ENCODE measurements at regions of chr1 and their contacts with region 1.

Region 1: GRCh38 chr1:46527474-46528296 is 23.8 kb downstream of the KNCN start:
- DNase-seq: peak in 1 of 2 donors; percentile 88
- H3K4me3 ChIP-seq: no peak overlapping the region
- H3K27ac ChIP-seq: no peak overlapping the region
- H3K4me1 ChIP-seq: peaks cover under 1 to 5% of the 10 kb centered on the region in 2 donors
- H3K27me3 ChIP-seq: no peaks in the 10 kb centered on the region
- CTCF ChIP-seq: peak; percentile 83 to 91 (median 90)

Region 2: DNA sequence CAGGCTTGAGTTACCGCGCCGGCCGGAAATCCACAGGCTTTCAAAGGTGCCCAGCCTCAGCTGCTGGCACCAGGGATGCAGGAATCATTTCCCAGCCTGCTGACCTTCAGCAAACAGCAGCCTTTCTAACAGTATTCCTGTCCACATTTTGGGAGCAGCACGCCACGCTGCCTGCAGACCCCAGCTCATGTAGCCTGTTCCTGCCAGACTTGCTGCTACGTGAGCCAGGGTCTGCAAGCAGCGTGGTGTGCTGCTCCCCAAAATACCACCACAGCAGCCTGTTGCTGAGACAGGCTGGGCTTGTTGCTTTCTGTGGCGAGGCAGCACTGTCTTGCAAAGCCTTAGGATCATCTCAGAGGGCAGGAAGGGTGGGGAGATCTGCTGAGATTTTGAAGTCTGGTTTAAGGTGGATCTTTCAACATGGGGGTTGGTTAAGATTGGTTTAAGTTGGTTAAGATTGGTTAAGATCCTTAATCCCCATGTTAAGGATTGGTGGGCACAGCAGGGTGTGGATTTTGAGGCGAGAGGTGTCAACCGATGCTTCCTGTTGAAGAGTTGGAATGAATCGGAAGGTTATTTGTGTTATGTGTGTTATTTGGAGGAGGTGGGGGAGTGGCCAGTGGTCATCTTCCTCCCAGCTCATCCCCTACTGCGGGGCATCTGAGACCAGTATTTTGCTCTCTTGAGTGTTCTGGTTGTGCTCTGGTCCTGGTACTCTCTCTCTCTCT is 120.6 kb before region 1 on chr1:
- intact Hi-C with region 1: loop called (anchors 1 kb)
- DNase-seq: no peak
- H3K4me3 ChIP-seq: peak overlapping the region; percentile 41 to 50
- H3K27ac ChIP-seq: no peak overlapping the region
- H3K4me1 ChIP-seq: peaks cover 6 to 21% of the 10 kb centered on the region in 2 donors
- H3K27me3 ChIP-seq: no peaks in the 10 kb centered on the region
- CTCF ChIP-seq: no peak

Region 3: DNA sequence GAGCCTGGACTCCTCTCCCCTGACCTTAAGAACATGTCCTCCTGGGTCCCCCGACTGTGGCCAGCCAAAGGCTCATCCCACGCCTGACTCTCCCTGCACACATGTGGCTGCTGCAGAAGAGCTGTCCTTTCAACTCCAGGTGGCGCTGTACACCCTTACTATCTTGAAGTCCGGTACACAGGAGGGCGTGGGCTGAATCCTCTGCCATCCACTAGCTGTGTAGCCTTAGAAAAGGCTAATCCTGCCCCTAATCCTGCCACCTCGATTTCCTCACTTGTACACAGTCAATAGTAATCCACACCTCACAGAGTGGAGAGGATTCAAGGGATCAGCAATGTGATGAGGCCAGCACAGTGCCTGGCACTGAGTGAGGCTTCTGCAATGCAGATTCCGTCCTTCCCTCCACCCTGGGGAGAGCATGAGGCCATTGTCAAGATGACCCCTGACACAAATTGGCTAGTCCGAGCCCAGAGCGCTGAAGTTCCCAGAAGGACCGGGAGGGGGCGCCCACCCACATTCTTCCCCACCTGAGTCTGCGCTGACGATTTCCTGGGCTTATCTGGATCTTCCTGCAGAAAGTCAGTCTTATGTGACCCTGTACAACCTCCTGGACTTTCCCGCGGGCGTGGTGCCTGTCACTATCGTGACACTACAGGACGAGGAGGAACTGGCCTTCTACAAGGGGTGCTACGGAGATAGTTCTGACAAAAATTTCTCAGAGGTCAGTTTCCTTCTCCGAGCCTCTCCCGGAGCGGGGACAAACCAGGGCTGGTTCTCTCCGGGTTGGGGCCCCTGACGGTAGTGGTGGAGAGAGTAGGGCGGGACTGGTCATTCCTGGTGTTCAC is 85.1 kb before region 1 on chr1:
- intact Hi-C with region 1: loop called (anchors 1 kb)
- DNase-seq: peak in 1 of 2 donors; percentile 88
- H3K4me3 ChIP-seq: peak overlapping the region; percentile 20 to 50
- H3K27ac ChIP-seq: no peak overlapping the region
- H3K4me1 ChIP-seq: no peaks in the 10 kb centered on the region
- H3K27me3 ChIP-seq: no peaks in the 10 kb centered on the region
- CTCF ChIP-seq: peak; percentile 65 to 93 (median 87)

Region 4: GRCh38 chr1:46477153-46477929 is 50.3 kb before region 1 on chr1:
- intact Hi-C with region 1: loop called (anchors 1 kb)
- DNase-seq: peak in 1 of 2 donors; percentile 80
- H3K4me3 ChIP-seq: no peak overlapping the region
- H3K27ac ChIP-seq: no peak overlapping the region
- H3K4me1 ChIP-seq: no peaks in the 10 kb centered on the region
- H3K27me3 ChIP-seq: no peaks in the 10 kb centered on the region
- CTCF ChIP-seq: peak; percentile 66 to 82 (median 77)

Region 5: GRCh38 chr1:46718727-46719622 is 191.3 kb after region 1 on chr1 and contains the start of gene EFCAB14:
- intact Hi-C with region 1: loop called (anchors 2 kb)
- DNase-seq: peak; percentile 83 to 97
- H3K4me3 ChIP-seq: peak within 1 kb of the TSS; percentile 97 to 99
- H3K27ac ChIP-seq: peak within 1 kb of the TSS; percentile 78 to 93
- H3K4me1 ChIP-seq: peaks cover 12 to 22% of the 10 kb centered on the region in 2 donors
- H3K27me3 ChIP-seq: no peaks in the 10 kb centered on the region
- CTCF ChIP-seq: no peak
- total RNA-seq, gene EFCAB14: 99.8 TPM